ENCODE measurements at regions of chr7 and their contacts with region 1.

Region 1: GRCh38 chr7:100803398-100804233 is 23.7 kb downstream of the EPHB4 start:
- DNase-seq: peak; percentile 95
- H3K4me3 Mint-ChIP-seq: peak overlapping the region; percentile 45
- H3K27ac Mint-ChIP-seq: peak overlapping the region; percentile 59
- H3K4me1 Mint-ChIP-seq: peaks cover 38% of the 10 kb centered on the region
- H3K27me3 Mint-ChIP-seq: no peaks in the 10 kb centered on the region
- CTCF ChIP-seq: no peak

Region 2: GRCh38 chr7:100726996-100727761 is 76.4 kb before region 1 on chr7:
- CTCF ChIA-PET with region 1: interaction called, 11 read pairs
- POLR2A ChIA-PET with region 1: interaction called, 15 read pairs
- intact Hi-C with region 1: no loop called
- DNase-seq: no peak
- H3K4me3 Mint-ChIP-seq: no peak overlapping the region
- H3K27ac Mint-ChIP-seq: no peak overlapping the region
- H3K4me1 Mint-ChIP-seq: peaks cover 12% of the 10 kb centered on the region
- H3K27me3 Mint-ChIP-seq: no peaks in the 10 kb centered on the region
- CTCF ChIP-seq: no peak

Region 3: GRCh38 chr7:100827330-100828227 is 24.0 kb after region 1 on chr7 and contains the start of gene EPHB4:
- CTCF ChIA-PET with region 1: interaction called, 26 read pairs
- POLR2A ChIA-PET with region 1: interaction called, 23 read pairs
- intact Hi-C with region 1: loop called (anchors 1 kb)
- DNase-seq: peak; percentile 80
- H3K4me3 Mint-ChIP-seq: peak within 1 kb of the TSS; percentile 96
- H3K27ac Mint-ChIP-seq: peak within 1 kb of the TSS; percentile 86
- H3K4me1 Mint-ChIP-seq: peaks cover 21% of the 10 kb centered on the region
- H3K27me3 Mint-ChIP-seq: no peaks in the 10 kb centered on the region
- CTCF ChIP-seq: peak; percentile 20
- total RNA-seq, gene EPHB4: 48.8 and 51.3 TPM in 2 replicates

Region 4: DNA sequence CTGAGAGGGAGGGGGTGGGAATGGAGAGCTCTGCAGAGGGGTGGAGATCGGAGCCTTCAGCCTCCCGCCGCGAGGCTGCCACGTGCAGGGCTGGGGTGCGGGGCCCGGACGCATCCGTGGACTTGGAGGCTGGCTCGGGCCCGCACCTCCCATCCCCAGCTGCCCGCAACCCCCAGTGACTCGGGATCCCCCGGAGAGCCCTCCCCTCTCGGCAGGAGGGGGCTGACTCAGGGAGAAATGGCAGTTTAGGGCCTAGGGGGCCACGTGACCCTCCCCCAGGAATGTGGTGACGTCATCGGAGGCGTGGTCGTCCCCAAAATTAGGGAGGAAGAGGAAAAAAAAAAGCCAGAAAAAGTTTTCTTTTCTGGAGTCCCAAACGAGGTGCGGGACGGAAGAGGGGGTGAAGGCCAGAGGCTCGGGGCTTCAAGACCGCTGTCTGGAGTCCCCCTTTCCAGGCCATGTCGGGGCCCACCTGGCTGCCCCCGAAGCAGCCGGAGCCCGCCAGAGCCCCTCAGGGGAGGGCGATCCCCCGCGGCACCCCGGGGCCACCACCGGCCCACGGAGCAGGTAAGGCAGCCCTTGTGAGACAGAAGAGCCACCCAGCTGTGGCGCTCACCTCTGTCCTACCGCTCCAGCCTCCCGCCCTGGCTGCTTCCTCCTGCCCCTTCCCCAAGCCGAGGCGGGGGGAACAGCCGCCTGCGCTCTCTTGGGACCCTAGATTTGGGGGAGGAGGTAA is 63.6 kb after region 1 on chr7 and contains the start of gene TRIP6:
- CTCF ChIA-PET with region 1: interaction called, 3 read pairs
- POLR2A ChIA-PET with region 1: interaction called, 12 read pairs
- intact Hi-C with region 1: no loop called
- DNase-seq: peak; percentile 95
- H3K4me3 Mint-ChIP-seq: peak within 1 kb of the TSS; percentile 85
- H3K27ac Mint-ChIP-seq: peak within 1 kb of the TSS; percentile 99
- H3K4me1 Mint-ChIP-seq: peaks cover 6% of the 10 kb centered on the region
- H3K27me3 Mint-ChIP-seq: no peaks in the 10 kb centered on the region
- CTCF ChIP-seq: no peak
- total RNA-seq, gene TRIP6: 106 and 132 TPM in 2 replicates

Region 5: GRCh38 chr7:100874577-100875355 is 71.2 kb after region 1 on chr7 and contains the start of gene SRRT:
- CTCF ChIA-PET with region 1: interaction called, 3 read pairs
- POLR2A ChIA-PET with region 1: interaction called, 20 read pairs
- intact Hi-C with region 1: no loop called
- DNase-seq: peak; percentile 99
- H3K4me3 Mint-ChIP-seq: peak within 1 kb of the TSS; percentile 97
- H3K27ac Mint-ChIP-seq: peak within 1 kb of the TSS; percentile 98
- H3K4me1 Mint-ChIP-seq: peaks cover 30% of the 10 kb centered on the region
- H3K27me3 Mint-ChIP-seq: no peaks in the 10 kb centered on the region
- CTCF ChIP-seq: no peak
- total RNA-seq, gene SRRT: 111 and 142 TPM in 2 replicates

Measured in MCF 10A (cell line).